A549 (cell line): ENCODE measurements at regions of chr1 and their contacts with region 1.

Region 1: GRCh38 chr1:25247024-25247828 is at the start of gene RSRP1:
- DNase-seq: peak; percentile 96 to 98
- ATAC-seq: peak; percentile 88 to 92
- H3K4me3 ChIP-seq: peak within 1 kb of the TSS; percentile 89
- H3K27ac ChIP-seq: peak within 1 kb of the TSS; percentile 98 to 99
- H3K4me1 ChIP-seq: peaks cover 14% of the 10 kb centered on the region; the same call in 2 of the 3 replicates
- CTCF ChIP-seq: no peak
- EP300 ChIP-seq: no peak
- POLR2A ChIP-seq: peak; percentile 99
- RAD21 ChIP-seq: no peak
- polyA plus RNA-seq, gene RSRP1: 45.0 and 50.6 TPM in 2 replicates

Region 2: GRCh38 chr1:25232027-25232865 is 15.0 kb before region 1 on chr1 and contains the start of gene SYF2:
- CTCF ChIA-PET with region 1: no interaction called
- POLR2A ChIA-PET with region 1: interaction called, 36 read pairs
- DNase-seq: peak; percentile 88 to 90
- ATAC-seq: peak; percentile 95 to 98
- H3K4me3 ChIP-seq: peak within 1 kb of the TSS; percentile 81
- H3K27ac ChIP-seq: peak within 1 kb of the TSS; percentile 91 to 94
- H3K4me1 ChIP-seq: peaks cover 13% of the 10 kb centered on the region
- CTCF ChIP-seq: no peak
- EP300 ChIP-seq: no peak
- POLR2A ChIP-seq: peak; percentile 28
- RAD21 ChIP-seq: no peak
- polyA plus RNA-seq, gene SYF2: 29.7 and 38.6 TPM in 2 replicates